Naive thymus-derived CD4-positive, alpha-beta T cell (primary cell): ENCODE measurements at regions of chrX and their contacts with region 1.

Region 1: DNA sequence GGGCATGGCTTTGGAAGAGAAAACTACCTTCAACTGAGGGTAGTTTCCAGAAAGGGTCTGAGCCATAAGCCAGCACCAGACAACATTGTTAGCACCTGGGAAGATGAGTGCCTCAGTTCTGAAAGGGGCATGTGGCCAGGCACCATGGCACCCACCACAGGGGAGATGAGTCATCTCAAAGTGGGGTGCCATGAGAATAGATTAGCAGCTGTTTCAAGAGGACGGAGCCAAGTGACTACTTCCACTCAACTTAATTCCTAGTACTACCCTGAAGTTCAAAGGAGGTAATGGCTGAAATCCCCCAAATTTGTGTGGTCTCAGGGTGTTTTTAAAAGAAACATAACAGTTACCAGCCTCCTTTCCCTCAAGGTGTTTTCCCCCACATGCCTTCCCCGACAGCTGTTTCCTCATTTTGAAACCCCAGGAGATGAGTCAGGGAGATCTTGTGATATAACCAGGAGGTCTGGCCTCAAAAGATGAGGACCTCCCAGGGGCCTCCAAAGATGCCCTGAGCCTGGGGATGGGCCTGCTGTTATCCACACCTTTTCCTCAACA is 27.8 kb upstream of the FTHL17 start:
- DNase-seq: peak in 1 of 9 donors; percentile 54
- ATAC-seq: no peak
- H3K4me3 ChIP-seq: no peak overlapping the region
- H3K4me3 Mint-ChIP-seq: peak overlapping the region in 1 of 10 donors; percentile 30
- H3K27ac ChIP-seq: no peak overlapping the region
- H3K27ac Mint-ChIP-seq: peak overlapping the region in 1 of 9 donors; percentile 81
- H3K4me1 ChIP-seq: no peaks in the 10 kb centered on the region
- H3K4me1 Mint-ChIP-seq: peaks cover 0 to 20% (median 0%) of the 10 kb centered on the region in 7 donors
- H3K27me3 ChIP-seq: no peaks in the 10 kb centered on the region
- H3K27me3 Mint-ChIP-seq: peaks cover 0 to 5% (median 0%) of the 10 kb centered on the region in 5 donors

Region 2: GRCh38 chrX:29107231-29107630 is 1992.4 kb before region 1 on chrX:
- CTCF ChIA-PET with region 1: no interaction called
- POLR2A ChIA-PET with region 1: no interaction called
- intact Hi-C with region 1: no loop called
- DNase-seq: no peak
- ATAC-seq: no peak
- H3K4me3 ChIP-seq: no peak overlapping the region
- H3K4me3 Mint-ChIP-seq: no peak overlapping the region
- H3K27ac ChIP-seq: no peak overlapping the region
- H3K27ac Mint-ChIP-seq: no peak overlapping the region
- H3K4me1 ChIP-seq: no peaks in the 10 kb centered on the region
- H3K4me1 Mint-ChIP-seq: no peaks in the 10 kb centered on the region
- H3K27me3 ChIP-seq: no peaks in the 10 kb centered on the region
- H3K27me3 Mint-ChIP-seq: no peaks in the 10 kb centered on the region

Region 3: GRCh38 chrX:31061091-31061490 is 38.5 kb before region 1 on chrX:
- CTCF ChIA-PET with region 1: no interaction called
- POLR2A ChIA-PET with region 1: no interaction called
- intact Hi-C with region 1: loop called in 1 of 2 experiments (anchors 5 kb)
- DNase-seq: no peak
- ATAC-seq: no peak
- H3K4me3 ChIP-seq: no peak overlapping the region
- H3K4me3 Mint-ChIP-seq: no peak overlapping the region
- H3K27ac ChIP-seq: no peak overlapping the region
- H3K27ac Mint-ChIP-seq: no peak overlapping the region
- H3K4me1 ChIP-seq: no peaks in the 10 kb centered on the region
- H3K4me1 Mint-ChIP-seq: peaks cover 0 to 7% (median 0%) of the 10 kb centered on the region in 7 donors
- H3K27me3 ChIP-seq: no peaks in the 10 kb centered on the region
- H3K27me3 Mint-ChIP-seq: no peaks in the 10 kb centered on the region

Region 4: GRCh38 chrX:31136144-31136611 is 36.6 kb after region 1 on chrX:
- CTCF ChIA-PET with region 1: no interaction called
- POLR2A ChIA-PET with region 1: no interaction called
- intact Hi-C with region 1: loop called in 1 of 2 experiments (anchors 5 kb)
- DNase-seq: no peak
- ATAC-seq: no peak
- H3K4me3 ChIP-seq: no peak overlapping the region
- H3K4me3 Mint-ChIP-seq: peak overlapping the region in 8 of 10 donors; percentile 48 to 83 (median 62)
- H3K27ac ChIP-seq: no peak overlapping the region
- H3K27ac Mint-ChIP-seq: peak overlapping the region in 3 of 9 donors; percentile 22 to 70 (median 41)
- H3K4me1 ChIP-seq: no peaks in the 10 kb centered on the region
- H3K4me1 Mint-ChIP-seq: peaks cover 0 to 14% (median 13%) of the 10 kb centered on the region in 7 donors
- H3K27me3 ChIP-seq: no peaks in the 10 kb centered on the region
- H3K27me3 Mint-ChIP-seq: peaks cover 0 to 3% (median 0%) of the 10 kb centered on the region in 5 donors

Region 5: DNA sequence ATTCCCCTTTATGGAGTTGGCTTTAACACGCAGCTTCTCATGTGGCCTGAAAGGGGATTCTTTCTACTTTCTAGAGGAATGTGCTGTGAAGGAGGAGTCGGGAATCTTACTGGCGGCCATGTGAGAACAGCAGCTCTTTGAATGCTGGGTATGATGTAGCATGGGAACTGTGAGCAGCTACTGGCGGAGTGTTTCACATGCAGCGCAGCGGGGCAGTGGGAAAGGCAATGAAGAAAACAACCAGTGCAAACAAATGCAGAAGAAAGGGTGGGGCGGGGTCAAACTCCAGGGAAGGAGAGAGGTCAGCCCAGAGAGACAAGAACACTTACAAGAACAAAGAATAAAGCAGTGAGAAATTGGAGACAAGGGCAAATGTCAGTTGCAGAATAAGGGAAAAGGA is 336.0 kb after region 1 on chrX:
- CTCF ChIA-PET with region 1: no interaction called
- POLR2A ChIA-PET with region 1: no interaction called
- intact Hi-C with region 1: no loop called
- DNase-seq: no peak
- ATAC-seq: no peak
- H3K4me3 ChIP-seq: no peak overlapping the region
- H3K4me3 Mint-ChIP-seq: no peak overlapping the region
- H3K27ac ChIP-seq: no peak overlapping the region
- H3K27ac Mint-ChIP-seq: no peak overlapping the region
- H3K4me1 ChIP-seq: no peaks in the 10 kb centered on the region
- H3K4me1 Mint-ChIP-seq: no peaks in the 10 kb centered on the region
- H3K27me3 ChIP-seq: no peaks in the 10 kb centered on the region
- H3K27me3 Mint-ChIP-seq: peaks cover 0 to 3% (median 0%) of the 10 kb centered on the region in 5 donors